ENCODE measurements at regions of chr20 and their contacts with region 1.

Region 1: DNA sequence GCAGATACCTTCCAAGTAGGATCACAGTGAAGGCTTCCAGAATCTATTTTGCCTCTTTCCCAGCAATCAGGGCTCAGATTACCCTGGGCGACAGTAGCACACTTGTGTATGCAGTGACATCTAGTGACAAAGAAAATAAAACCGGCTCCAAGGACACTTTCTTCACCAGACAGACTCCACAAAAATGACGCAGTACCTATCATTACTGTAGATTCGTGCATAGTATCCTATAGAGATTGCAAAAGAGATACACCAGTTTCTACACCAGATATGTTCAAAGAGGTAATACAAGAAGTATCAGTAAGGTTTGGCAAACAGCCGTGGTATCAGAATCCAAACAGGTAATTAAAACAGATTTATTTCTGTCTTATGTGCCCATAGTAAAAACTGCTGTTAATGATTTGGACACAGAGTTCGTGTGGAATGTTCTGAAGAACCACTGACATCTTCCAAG is 600.4 kb upstream of the JAG1 start:
- DNase-seq: peak; percentile 38
- H3K4me3 Mint-ChIP-seq: no peak overlapping the region
- H3K27ac Mint-ChIP-seq: no peak overlapping the region
- H3K4me1 Mint-ChIP-seq: peaks cover 19% of the 10 kb centered on the region
- H3K27me3 Mint-ChIP-seq: no peaks in the 10 kb centered on the region
- CTCF ChIP-seq: no peak

Region 2: DNA sequence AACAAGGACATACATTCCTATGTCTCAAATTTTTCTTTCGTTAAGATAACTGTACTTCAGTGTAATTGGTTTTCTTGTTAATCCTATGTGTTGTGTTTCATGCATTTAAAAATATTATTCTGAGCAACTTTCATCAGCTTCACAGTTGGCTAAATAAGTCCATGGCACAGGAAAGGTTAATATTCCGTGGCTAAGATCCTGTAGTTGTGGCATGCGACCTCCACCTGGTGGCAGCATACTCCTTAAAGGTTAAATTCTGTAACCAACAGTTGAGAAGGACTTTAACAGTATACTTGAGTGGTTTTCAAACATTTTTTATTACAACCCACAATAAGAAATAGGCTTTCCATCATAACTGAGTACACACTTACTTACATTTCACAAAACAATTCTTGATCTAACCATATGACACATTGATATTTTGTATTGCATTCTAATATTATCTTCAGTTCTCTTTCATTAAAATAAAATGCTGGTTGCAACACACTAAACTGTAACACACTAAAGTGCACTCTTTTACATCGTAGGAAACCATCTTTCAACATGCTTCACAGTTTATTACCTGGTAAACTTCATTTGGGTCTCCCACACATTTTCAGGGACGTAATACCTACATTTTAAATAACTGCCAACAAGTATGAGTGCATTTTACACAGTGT is 720.7 kb before region 1 on chr20:
- CTCF ChIA-PET with region 1: no interaction called
- intact Hi-C with region 1: loop called (anchors 2 kb)
- DNase-seq: peak; percentile 63
- H3K4me3 Mint-ChIP-seq: no peak overlapping the region
- H3K27ac Mint-ChIP-seq: no peak overlapping the region
- H3K4me1 Mint-ChIP-seq: peaks cover 46% of the 10 kb centered on the region
- H3K27me3 Mint-ChIP-seq: no peaks in the 10 kb centered on the region
- CTCF ChIP-seq: peak; percentile 40

Region 3: GRCh38 chr20:10954137-10954840 is 319.9 kb before region 1 on chr20:
- CTCF ChIA-PET with region 1: no interaction called
- intact Hi-C with region 1: loop called (anchors 5 kb)
- DNase-seq: peak; percentile 53
- H3K4me3 Mint-ChIP-seq: no peak overlapping the region
- H3K27ac Mint-ChIP-seq: no peak overlapping the region
- H3K4me1 Mint-ChIP-seq: peaks cover 28% of the 10 kb centered on the region
- H3K27me3 Mint-ChIP-seq: no peaks in the 10 kb centered on the region
- CTCF ChIP-seq: no peak

Region 4: DNA sequence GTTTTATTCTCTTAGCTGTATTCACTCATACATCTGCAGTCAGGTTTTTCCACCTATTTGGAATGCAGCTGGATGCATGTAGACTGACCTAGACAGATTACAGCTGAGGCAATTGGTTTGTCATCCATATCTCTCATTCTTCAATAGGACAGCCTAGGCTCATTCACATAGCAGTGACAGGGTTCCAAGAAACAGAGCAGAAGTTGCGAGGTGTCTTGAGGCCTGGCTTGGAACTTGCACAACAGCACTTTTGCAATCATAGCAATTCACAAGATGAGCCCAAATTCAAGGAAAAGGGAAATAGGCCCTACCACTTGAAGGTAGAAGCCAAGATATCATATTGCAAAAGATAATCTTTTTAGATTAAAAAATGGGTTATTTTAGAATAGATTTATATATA is 91.4 kb before region 1 on chr20:
- CTCF ChIA-PET with region 1: no interaction called
- intact Hi-C with region 1: no loop called
- DNase-seq: no peak
- H3K4me3 Mint-ChIP-seq: no peak overlapping the region
- H3K27ac Mint-ChIP-seq: no peak overlapping the region
- H3K4me1 Mint-ChIP-seq: peaks cover 8% of the 10 kb centered on the region
- H3K27me3 Mint-ChIP-seq: no peaks in the 10 kb centered on the region
- CTCF ChIP-seq: no peak

Region 5: GRCh38 chr20:11454966-11455799 is 181.0 kb after region 1 on chr20:
- CTCF ChIA-PET with region 1: no interaction called
- intact Hi-C with region 1: loop called (anchors 10 kb)
- DNase-seq: peak; percentile 19
- H3K4me3 Mint-ChIP-seq: peak overlapping the region; percentile 29
- H3K27ac Mint-ChIP-seq: peak overlapping the region; percentile 90
- H3K4me1 Mint-ChIP-seq: peaks cover 43% of the 10 kb centered on the region
- H3K27me3 Mint-ChIP-seq: no peaks in the 10 kb centered on the region
- CTCF ChIP-seq: no peak

Measured in Calu3 (cell line).